Lower lobe of right lung (tissue), 2 donors: ENCODE measurements at regions of chr1 and their contacts with region 1.

Region 1: DNA sequence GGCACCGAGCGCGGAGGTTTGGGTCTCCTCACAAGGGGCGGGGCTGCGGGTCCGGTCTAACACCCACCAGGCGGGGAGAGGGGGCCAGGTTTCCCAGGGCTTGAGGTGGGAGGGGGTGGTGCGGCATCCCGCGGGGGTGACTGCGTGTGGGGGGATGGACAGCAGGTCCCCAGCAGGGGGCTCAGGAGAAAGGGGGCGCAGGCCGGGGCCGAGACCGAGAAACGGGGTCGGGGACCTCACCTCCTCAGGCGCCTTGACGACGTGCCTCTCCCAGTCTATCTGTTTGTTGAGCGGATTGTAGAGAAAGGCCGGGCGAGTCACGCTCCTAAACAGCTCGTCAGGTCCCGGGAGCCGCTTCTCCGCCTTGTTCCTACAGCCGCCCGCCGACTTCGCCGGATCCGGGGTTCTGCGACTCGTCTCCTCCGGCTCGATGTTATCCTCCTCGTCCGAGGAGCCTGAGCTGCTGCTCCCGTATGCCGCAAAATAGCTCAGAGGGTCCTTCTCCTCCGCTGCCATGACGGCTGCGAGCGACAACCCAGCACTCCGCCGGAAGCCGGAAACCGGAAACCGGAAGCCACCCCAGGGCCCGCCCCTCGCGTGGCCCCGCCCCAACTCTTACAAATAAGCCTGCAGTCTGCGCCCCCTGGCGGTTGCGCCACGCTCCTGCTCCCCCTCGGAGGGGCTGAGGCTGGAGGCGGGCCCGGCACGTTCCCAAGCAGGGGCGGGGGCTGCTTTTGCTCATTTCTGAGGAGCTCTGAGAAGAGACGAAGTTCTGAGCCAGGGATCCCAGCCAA is at the start of gene C1orf52:
- DNase-seq: peak; percentile 96
- ATAC-seq: peak; percentile 98 to 99
- H3K4me3 ChIP-seq: peak within 1 kb of the TSS; percentile 97
- H3K27ac ChIP-seq: peak within 1 kb of the TSS; percentile 89
- H3K4me1 ChIP-seq: peaks cover 38% of the 10 kb centered on the region
- H3K27me3 ChIP-seq: no peaks in the 10 kb centered on the region
- CTCF ChIP-seq: peak; percentile 100
- total RNA-seq, gene C1orf52: 23.4 TPM

Region 2: GRCh38 chr1:84944767-84945486 is 314.4 kb before region 1 on chr1:
- intact Hi-C with region 1: loop called (anchors 10 kb)
- DNase-seq: no peak
- ATAC-seq: peak; percentile 98
- H3K4me3 ChIP-seq: peak overlapping the region; percentile 57
- H3K27ac ChIP-seq: peak overlapping the region; percentile 78
- H3K4me1 ChIP-seq: peaks cover 4% of the 10 kb centered on the region
- H3K27me3 ChIP-seq: no peaks in the 10 kb centered on the region
- CTCF ChIP-seq: peak; percentile 91

Region 3: GRCh38 chr1:85116856-85117255 is 142.5 kb before region 1 on chr1:
- intact Hi-C with region 1: loop called (anchors 10 kb)
- DNase-seq: no peak
- ATAC-seq: no peak
- H3K4me3 ChIP-seq: no peak overlapping the region
- H3K27ac ChIP-seq: no peak overlapping the region
- H3K4me1 ChIP-seq: no peaks in the 10 kb centered on the region
- H3K27me3 ChIP-seq: no peaks in the 10 kb centered on the region
- CTCF ChIP-seq: no peak